ENCODE measurements at regions of chr12 and their contacts with region 1.

Region 1: DNA sequence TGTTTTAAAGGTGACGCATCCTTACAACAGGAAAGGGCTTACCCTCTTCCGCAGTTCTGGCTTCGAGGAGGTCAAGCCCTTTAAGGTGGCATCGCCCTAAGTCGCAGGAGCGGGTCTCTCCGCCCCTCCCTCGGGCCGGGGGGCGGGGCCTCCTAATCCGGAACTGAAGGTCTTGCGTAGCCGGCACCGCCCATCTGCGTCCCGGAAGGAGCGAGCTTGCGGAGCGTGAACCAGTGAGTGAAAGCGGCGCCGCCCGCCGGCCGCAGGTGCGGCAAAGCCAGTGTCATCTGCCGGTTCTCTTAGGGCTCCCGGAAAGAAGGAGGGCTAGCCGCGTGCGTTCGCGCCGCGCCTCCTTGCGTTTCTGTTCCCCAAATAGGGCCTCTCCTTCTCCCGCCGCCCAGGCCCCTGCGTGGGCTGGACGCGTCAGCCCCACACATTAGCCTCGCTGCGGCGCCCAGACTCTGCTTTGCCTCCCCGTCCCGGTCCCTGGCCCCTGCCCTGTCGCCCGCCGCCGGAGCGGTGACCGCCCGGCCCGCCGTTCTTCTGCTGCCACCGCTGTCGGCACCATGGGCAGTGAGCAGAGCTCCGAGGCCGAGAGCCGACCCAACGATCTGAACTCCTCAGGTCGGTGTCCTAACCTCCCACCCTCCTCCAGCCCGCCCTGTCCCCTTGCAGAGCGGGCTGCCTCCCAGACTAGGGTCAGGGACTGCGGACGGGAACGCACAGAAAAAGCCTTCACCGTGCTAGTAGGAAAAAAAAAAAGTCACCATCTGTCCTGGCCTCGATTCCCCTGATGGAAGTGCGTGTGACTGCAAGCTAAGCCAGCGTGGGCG is at the start of gene BORCS5:
- DNase-seq: peak; percentile 98 to 99 (median 99)
- H3K4me3 ChIP-seq: peak within 1 kb of the TSS; percentile 88 to 90
- H3K4me3 Mint-ChIP-seq: peak within 1 kb of the TSS; percentile 90 to 96 (median 95)
- H3K27ac ChIP-seq: peak within 1 kb of the TSS; percentile 99
- H3K27ac Mint-ChIP-seq: peak within 1 kb of the TSS; percentile 89 to 99 (median 98)
- H3K4me1 ChIP-seq: peaks cover 44% of the 10 kb centered on the region
- H3K4me1 Mint-ChIP-seq: peaks cover 29 to 76% (median 42%) of the 10 kb centered on the region in 4 donors
- H3K27me3 ChIP-seq: no peaks in the 10 kb centered on the region
- H3K27me3 Mint-ChIP-seq: no peaks in the 10 kb centered on the region
- total RNA-seq, gene BORCS5: 21.3 to 26.8 TPM

Region 2: GRCh38 chr12:11949738-11950411 is 407.2 kb before region 1 on chr12:
- CTCF ChIA-PET with region 1: no interaction called
- POLR2A ChIA-PET with region 1: no interaction called
- intact Hi-C with region 1: no loop called
- DNase-seq: no peak
- H3K4me3 ChIP-seq: no peak overlapping the region
- H3K4me3 Mint-ChIP-seq: no peak overlapping the region
- H3K27ac ChIP-seq: no peak overlapping the region
- H3K27ac Mint-ChIP-seq: peak overlapping the region in 2 of 7 donors; percentile 14 to 62
- H3K4me1 ChIP-seq: peaks cover 11% of the 10 kb centered on the region
- H3K4me1 Mint-ChIP-seq: peaks cover 15 to 31% (median 20%) of the 10 kb centered on the region in 4 donors
- H3K27me3 ChIP-seq: no peaks in the 10 kb centered on the region
- H3K27me3 Mint-ChIP-seq: no peaks in the 10 kb centered on the region

Region 3: GRCh38 chr12:12266873-12267741 is 90.0 kb before region 1 on chr12 and contains the start of gene LRP6:
- CTCF ChIA-PET with region 1: no interaction called
- POLR2A ChIA-PET with region 1: interaction called, 19 read pairs
- intact Hi-C with region 1: no loop called
- DNase-seq: peak; percentile 55 to 75 (median 67)
- H3K4me3 ChIP-seq: peak within 1 kb of the TSS; percentile 65 to 76
- H3K4me3 Mint-ChIP-seq: peak within 1 kb of the TSS; percentile 85 to 91 (median 90)
- H3K27ac ChIP-seq: peak within 1 kb of the TSS; percentile 32
- H3K27ac Mint-ChIP-seq: peak within 1 kb of the TSS; percentile 46 to 78 (median 70)
- H3K4me1 ChIP-seq: peaks cover 18% of the 10 kb centered on the region
- H3K4me1 Mint-ChIP-seq: peaks cover 12 to 31% (median 21%) of the 10 kb centered on the region in 4 donors
- H3K27me3 ChIP-seq: peaks cover 6% of the 10 kb centered on the region
- H3K27me3 Mint-ChIP-seq: peaks cover 0 to 13% of the 10 kb centered on the region in 2 donors
- total RNA-seq, gene LRP6: 3.9 to 4.0 TPM

Region 4: GRCh38 chr12:12315838-12316237 is 41.3 kb before region 1 on chr12:
- CTCF ChIA-PET with region 1: no interaction called
- POLR2A ChIA-PET with region 1: no interaction called
- intact Hi-C with region 1: no loop called
- DNase-seq: no peak
- H3K4me3 ChIP-seq: no peak overlapping the region
- H3K4me3 Mint-ChIP-seq: no peak overlapping the region
- H3K27ac ChIP-seq: no peak overlapping the region
- H3K27ac Mint-ChIP-seq: no peak overlapping the region
- H3K4me1 ChIP-seq: no peaks in the 10 kb centered on the region
- H3K4me1 Mint-ChIP-seq: no peaks in the 10 kb centered on the region
- H3K27me3 ChIP-seq: no peaks in the 10 kb centered on the region
- H3K27me3 Mint-ChIP-seq: peaks cover 0 to 5% of the 10 kb centered on the region in 2 donors

Region 5: GRCh38 chr12:12384571-12385340 is 27.7 kb after region 1 on chr12:
- CTCF ChIA-PET with region 1: no interaction called
- POLR2A ChIA-PET with region 1: interaction called, 49 read pairs
- intact Hi-C with region 1: no loop called
- DNase-seq: peak in 4 of 5 donors; percentile 46 to 48 (median 47)
- H3K4me3 ChIP-seq: peak overlapping the region in 1 of 2 donors; percentile 9
- H3K4me3 Mint-ChIP-seq: peak overlapping the region; percentile 59 to 85 (median 74)
- H3K27ac ChIP-seq: peak overlapping the region; percentile 50
- H3K27ac Mint-ChIP-seq: peak overlapping the region; percentile 86 to 99 (median 96)
- H3K4me1 ChIP-seq: peaks cover 87% of the 10 kb centered on the region
- H3K4me1 Mint-ChIP-seq: peaks cover 46 to 87% (median 68%) of the 10 kb centered on the region in 4 donors
- H3K27me3 ChIP-seq: no peaks in the 10 kb centered on the region
- H3K27me3 Mint-ChIP-seq: no peaks in the 10 kb centered on the region

Region 6: DNA sequence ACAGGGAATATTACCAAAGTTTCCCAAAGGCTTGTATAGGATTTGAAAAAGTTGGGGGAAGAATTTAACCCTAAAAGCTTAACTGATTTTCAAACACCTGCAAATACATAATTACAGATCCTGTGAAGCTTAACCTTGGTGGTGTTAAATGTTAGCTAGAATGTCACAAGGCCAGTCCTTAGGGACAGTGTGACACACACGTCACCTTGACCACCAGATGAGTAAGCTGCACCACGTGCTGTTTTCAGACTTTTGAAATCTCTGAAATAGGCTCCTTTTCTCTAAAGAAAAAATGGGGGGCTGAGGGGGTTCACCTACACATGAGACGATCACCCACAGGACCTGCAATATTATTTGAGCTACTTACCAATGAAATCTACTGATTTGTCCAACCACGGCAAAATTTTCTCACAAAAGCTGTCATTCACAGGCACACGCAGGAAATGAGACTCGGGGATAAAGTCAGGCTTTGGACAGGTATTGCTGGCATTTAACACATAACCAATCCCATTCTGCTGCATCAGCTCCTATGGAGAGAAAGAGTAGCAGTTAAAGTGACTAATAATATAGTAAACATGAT is 129.6 kb after region 1 on chr12:
- CTCF ChIA-PET with region 1: no interaction called
- POLR2A ChIA-PET with region 1: interaction called, 38 read pairs
- intact Hi-C with region 1: no loop called
- DNase-seq: no peak
- H3K4me3 ChIP-seq: no peak overlapping the region
- H3K4me3 Mint-ChIP-seq: peak overlapping the region in 6 of 8 donors; percentile 14 to 65 (median 28)
- H3K27ac ChIP-seq: peak overlapping the region; percentile 40
- H3K27ac Mint-ChIP-seq: peak overlapping the region; percentile 84 to 99 (median 92)
- H3K4me1 ChIP-seq: peaks cover 78% of the 10 kb centered on the region
- H3K4me1 Mint-ChIP-seq: peaks cover 36 to 70% (median 56%) of the 10 kb centered on the region in 4 donors
- H3K27me3 ChIP-seq: no peaks in the 10 kb centered on the region
- H3K27me3 Mint-ChIP-seq: no peaks in the 10 kb centered on the region

Region 7: DNA sequence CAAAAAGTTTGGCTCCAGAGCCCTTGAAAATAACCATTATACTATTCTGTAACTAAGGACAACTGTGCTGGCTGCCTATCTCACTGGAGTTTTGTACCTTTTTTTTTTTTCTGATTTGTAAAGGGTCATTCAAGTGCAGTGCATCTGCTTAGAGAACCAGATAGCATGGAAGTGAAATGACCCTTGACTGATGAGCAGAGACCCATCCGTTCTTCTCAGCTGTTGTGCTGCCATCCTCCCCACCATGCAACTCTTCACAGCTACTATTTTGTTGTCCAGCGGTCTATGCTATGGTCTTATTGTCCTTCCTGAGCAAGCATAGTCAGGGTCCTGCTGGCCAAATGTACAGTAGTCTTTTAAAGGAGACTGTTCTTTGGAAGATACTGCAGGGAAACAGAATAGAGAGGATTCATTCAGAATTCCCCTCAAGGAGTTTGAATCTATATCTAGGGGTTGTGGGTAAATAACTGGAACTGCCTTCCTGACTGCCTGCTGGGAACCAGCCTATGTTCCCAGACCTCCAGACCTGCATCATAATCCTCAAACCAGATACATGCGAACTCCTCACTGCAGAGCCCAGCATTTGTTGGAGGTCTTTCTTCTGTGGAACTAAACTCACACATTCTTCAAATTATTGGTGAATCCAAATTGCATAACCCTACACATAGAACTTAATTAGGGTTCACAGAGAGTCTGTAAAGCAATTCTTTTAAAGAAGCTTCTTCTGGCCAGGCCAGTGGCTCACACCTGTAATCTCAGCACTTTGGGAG is 297.8 kb after region 1 on chr12:
- CTCF ChIA-PET with region 1: interaction called, 11 read pairs
- POLR2A ChIA-PET with region 1: interaction called, 4 read pairs
- intact Hi-C with region 1: no loop called
- DNase-seq: no peak
- H3K4me3 ChIP-seq: no peak overlapping the region
- H3K4me3 Mint-ChIP-seq: no peak overlapping the region
- H3K27ac ChIP-seq: no peak overlapping the region
- H3K27ac Mint-ChIP-seq: peak overlapping the region in 2 of 7 donors; percentile 70 to 79
- H3K4me1 ChIP-seq: peaks cover 13% of the 10 kb centered on the region
- H3K4me1 Mint-ChIP-seq: peaks cover 13 to 19% (median 14%) of the 10 kb centered on the region in 4 donors
- H3K27me3 ChIP-seq: no peaks in the 10 kb centered on the region
- H3K27me3 Mint-ChIP-seq: no peaks in the 10 kb centered on the region

Region 8: GRCh38 chr12:12724661-12725545 is 367.8 kb after region 1 on chr12:
- CTCF ChIA-PET with region 1: interaction called, 8 read pairs
- POLR2A ChIA-PET with region 1: interaction called, 473 read pairs
- intact Hi-C with region 1: loop called (anchors 1 kb)
- DNase-seq: peak; percentile 93 to 97 (median 96)
- H3K4me3 ChIP-seq: peak overlapping the region in 1 of 2 donors; percentile 80
- H3K4me3 Mint-ChIP-seq: peak overlapping the region; percentile 89 to 96 (median 92)
- H3K27ac ChIP-seq: peak overlapping the region; percentile 95
- H3K27ac Mint-ChIP-seq: peak overlapping the region; percentile 95 to 99 (median 97)
- H3K4me1 ChIP-seq: peaks cover 56% of the 10 kb centered on the region
- H3K4me1 Mint-ChIP-seq: peaks cover 37 to 72% (median 43%) of the 10 kb centered on the region in 4 donors
- H3K27me3 ChIP-seq: no peaks in the 10 kb centered on the region
- H3K27me3 Mint-ChIP-seq: peaks cover 0 to 1% of the 10 kb centered on the region in 2 donors

Region 9: GRCh38 chr12:12999959-13000615 is 643.0 kb after region 1 on chr12 and contains the start of gene HEBP1:
- CTCF ChIA-PET with region 1: no interaction called
- POLR2A ChIA-PET with region 1: no interaction called
- intact Hi-C with region 1: loop called (anchors 10 kb)
- DNase-seq: peak; percentile 92 to 95 (median 93)
- H3K4me3 ChIP-seq: peak within 1 kb of the TSS; percentile 61 to 81
- H3K4me3 Mint-ChIP-seq: peak within 1 kb of the TSS; percentile 82 to 97 (median 90)
- H3K27ac ChIP-seq: peak within 1 kb of the TSS; percentile 64
- H3K27ac Mint-ChIP-seq: peak within 1 kb of the TSS; percentile 82 to 95 (median 90)
- H3K4me1 ChIP-seq: peaks cover 26% of the 10 kb centered on the region
- H3K4me1 Mint-ChIP-seq: peaks cover 20 to 44% (median 30%) of the 10 kb centered on the region in 4 donors
- H3K27me3 ChIP-seq: no peaks in the 10 kb centered on the region
- H3K27me3 Mint-ChIP-seq: no peaks in the 10 kb centered on the region
- total RNA-seq, gene HEBP1: 11.3 to 13.9 TPM